Sigmoid colon (tissue), 7 donors: ENCODE measurements at regions of chr13 and their contacts with region 1.

Region 1: GRCh38 chr13:110687736-110688135 is 18.2 kb downstream of the CARS2 start:
- DNase-seq: no peak
- H3K4me3 ChIP-seq: no peak overlapping the region
- H3K27ac ChIP-seq: peak overlapping the region in 2 of 4 donors; percentile 7 to 94
- H3K4me1 ChIP-seq: peaks cover 0 to 23% (median 21%) of the 10 kb centered on the region in 4 donors
- H3K27me3 ChIP-seq: no peaks in the 10 kb centered on the region
- CTCF ChIP-seq: no peak
- EP300 ChIP-seq: no peak
- POLR2A ChIP-seq: no peak

Region 2: DNA sequence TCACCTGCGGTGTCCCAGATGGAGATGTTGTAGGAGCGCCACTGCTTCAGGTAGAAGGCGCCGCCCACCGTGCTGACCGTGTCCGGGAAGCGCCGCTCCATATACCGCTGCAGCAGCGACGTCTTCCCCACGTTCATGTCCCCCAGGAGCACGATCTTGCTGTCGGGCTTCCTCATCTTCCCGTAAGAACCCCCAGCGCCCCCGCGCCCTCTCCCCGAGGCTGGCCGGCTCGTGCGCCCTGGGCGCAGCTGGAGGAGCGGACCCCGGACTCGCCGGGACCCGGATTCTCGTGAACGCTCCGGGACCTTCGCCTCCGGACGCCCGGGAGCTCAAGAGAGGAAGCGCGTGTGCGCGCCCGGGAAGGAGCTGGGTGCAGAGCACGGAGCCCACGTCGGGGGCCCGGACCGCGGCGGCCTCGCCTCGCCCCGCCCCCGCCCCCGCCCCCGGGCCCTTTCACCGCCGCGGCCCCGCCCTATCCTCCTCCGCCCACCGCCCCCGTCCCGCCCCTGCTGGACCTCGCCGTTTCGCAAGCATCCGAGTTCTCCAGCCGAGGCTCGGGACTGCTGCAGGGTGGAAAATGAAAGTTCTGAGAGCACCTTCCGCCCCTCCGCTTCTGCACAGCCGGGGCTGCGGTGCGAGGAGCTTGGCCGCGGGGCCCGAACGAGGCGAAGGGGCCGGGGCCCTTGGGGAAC is 126.2 kb before region 1 on chr13 and contains the start of gene RAB20:
- intact Hi-C with region 1: no loop called
- DNase-seq: peak; percentile 95
- H3K4me3 ChIP-seq: peak within 1 kb of the TSS; percentile 57 to 89 (median 76)
- H3K27ac ChIP-seq: peak within 1 kb of the TSS; percentile 92 to 93 (median 92)
- H3K4me1 ChIP-seq: peaks cover 0 to 44% (median 25%) of the 10 kb centered on the region in 4 donors
- H3K27me3 ChIP-seq: no peaks in the 10 kb centered on the region
- CTCF ChIP-seq: no peak
- EP300 ChIP-seq: no peak
- POLR2A ChIP-seq: peak; percentile 42 to 43
- total RNA-seq, gene RAB20: 6.9 to 21.3 (median 15.1) TPM

Region 3: GRCh38 chr13:110593430-110594130 is 94.2 kb before region 1 on chr13:
- intact Hi-C with region 1: no loop called
- DNase-seq: no peak
- H3K4me3 ChIP-seq: no peak overlapping the region
- H3K27ac ChIP-seq: no peak overlapping the region
- H3K4me1 ChIP-seq: peaks cover 0 to 13% (median 0%) of the 10 kb centered on the region in 4 donors
- H3K27me3 ChIP-seq: no peaks in the 10 kb centered on the region
- CTCF ChIP-seq: peak; percentile 62 to 65 (median 63)
- EP300 ChIP-seq: no peak
- POLR2A ChIP-seq: no peak

Region 4: GRCh38 chr13:110702591-110703526 is 15.1 kb after region 1 on chr13:
- intact Hi-C with region 1: loop called (anchors 2 kb)
- DNase-seq: peak; percentile 50
- H3K4me3 ChIP-seq: no peak overlapping the region
- H3K27ac ChIP-seq: peak overlapping the region in 1 of 4 donors; percentile 96
- H3K4me1 ChIP-seq: peaks cover 0 to 42% (median 32%) of the 10 kb centered on the region in 4 donors
- H3K27me3 ChIP-seq: no peaks in the 10 kb centered on the region
- CTCF ChIP-seq: no peak
- EP300 ChIP-seq: no peak
- POLR2A ChIP-seq: no peak

Region 5: GRCh38 chr13:111115965-111116500 is 428.3 kb after region 1 on chr13:
- intact Hi-C with region 1: no loop called
- DNase-seq: no peak
- H3K4me3 ChIP-seq: peak overlapping the region; percentile 23 to 61 (median 52)
- H3K27ac ChIP-seq: peak overlapping the region; percentile 60 to 78 (median 68)
- H3K4me1 ChIP-seq: peaks cover 0 to 24% (median 12%) of the 10 kb centered on the region in 4 donors
- H3K27me3 ChIP-seq: peaks cover 0 to 59% (median 46%) of the 10 kb centered on the region in 3 donors
- CTCF ChIP-seq: no peak
- EP300 ChIP-seq: no peak
- POLR2A ChIP-seq: no peak